Ovary (tissue), 10 donors: ENCODE measurements at regions of chr17 and their contacts with region 1.

Region 1: DNA sequence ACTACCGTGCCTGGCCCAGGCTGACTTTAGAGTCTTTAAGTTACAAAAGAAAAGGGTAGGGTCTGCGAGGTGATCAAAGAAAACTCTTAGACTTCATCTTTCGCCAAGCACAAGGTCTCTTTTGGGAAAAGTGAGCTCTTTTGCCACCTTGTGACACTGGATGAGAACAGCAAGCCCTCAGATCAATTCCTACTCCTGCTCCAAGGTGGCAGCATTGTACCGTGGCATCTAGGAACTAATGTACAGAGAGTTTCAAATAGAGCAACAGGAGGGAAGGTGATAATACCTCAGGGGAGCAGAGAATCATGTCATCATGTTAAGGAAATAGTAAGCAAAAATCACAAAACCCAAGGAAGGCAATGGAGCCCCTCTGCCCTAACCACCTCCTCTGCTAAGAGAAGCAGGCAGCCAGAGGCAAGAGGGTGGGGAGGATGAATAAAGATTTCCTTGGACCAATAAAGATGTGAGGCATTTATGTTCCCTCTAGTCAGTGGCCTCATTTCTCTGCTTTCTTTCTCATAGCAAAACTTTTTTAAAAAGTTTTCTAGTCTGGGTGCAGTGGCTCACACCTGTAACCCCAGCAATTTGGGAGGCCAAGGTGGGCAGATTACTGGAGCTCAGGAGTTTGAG is 2.1 kb upstream of the C17orf78 start:
- DNase-seq: peak; percentile 45 to 60 (median 56)
- H3K4me3 ChIP-seq: no peak overlapping the region
- H3K27ac ChIP-seq: no peak overlapping the region
- H3K4me1 ChIP-seq: no peaks in the 10 kb centered on the region
- H3K27me3 ChIP-seq: no peaks in the 10 kb centered on the region
- CTCF ChIP-seq: peak; percentile 64 to 90 (median 78)
- EP300 ChIP-seq: no peak
- POLR2A ChIP-seq: no peak

Region 2: DNA sequence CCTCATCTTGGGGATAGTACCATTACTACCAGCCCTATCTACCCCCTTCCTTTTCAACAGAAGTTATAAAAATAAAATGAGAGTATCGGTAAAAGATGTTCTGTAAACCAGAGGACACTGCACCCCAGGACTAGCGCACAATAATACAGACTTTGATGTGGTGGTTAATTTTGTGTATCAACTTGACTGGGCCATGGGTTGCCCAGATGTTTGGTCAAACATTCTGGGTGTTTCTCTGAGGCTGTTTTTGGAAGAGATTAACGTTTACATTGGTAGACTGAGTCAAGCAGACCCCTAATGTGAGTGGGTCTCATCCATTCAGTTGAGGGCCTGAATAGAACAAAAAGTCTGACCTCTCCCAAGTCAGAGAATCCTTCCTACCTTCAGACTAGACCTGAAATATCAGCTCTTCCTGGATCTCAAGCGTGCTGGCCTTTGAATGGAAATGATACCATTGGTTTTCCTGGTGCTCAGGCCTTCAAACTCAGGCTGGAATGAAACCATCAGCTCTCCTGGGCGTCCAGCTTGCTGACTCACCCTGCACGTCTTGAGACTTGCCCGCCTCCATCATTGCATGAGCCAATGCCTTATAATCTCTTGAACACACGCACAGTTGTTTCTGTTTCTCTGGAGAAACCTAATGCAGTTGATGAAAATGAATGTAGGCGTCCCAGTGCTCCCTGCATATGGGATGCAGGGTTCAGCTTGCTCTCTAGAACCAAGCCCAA is 762.1 kb before region 1 on chr17:
- intact Hi-C with region 1: loop called in 1 of 4 experiments (anchors 10 kb)
- DNase-seq: no peak
- H3K4me3 ChIP-seq: no peak overlapping the region
- H3K27ac ChIP-seq: no peak overlapping the region
- H3K4me1 ChIP-seq: peaks cover 5% of the 10 kb centered on the region
- H3K27me3 ChIP-seq: no peaks in the 10 kb centered on the region
- CTCF ChIP-seq: no peak
- EP300 ChIP-seq: no peak
- POLR2A ChIP-seq: no peak

Region 3: GRCh38 chr17:37327341-37328090 is 46.1 kb before region 1 on chr17:
- intact Hi-C with region 1: no loop called
- DNase-seq: no peak
- H3K4me3 ChIP-seq: no peak overlapping the region
- H3K27ac ChIP-seq: no peak overlapping the region
- H3K4me1 ChIP-seq: no peaks in the 10 kb centered on the region
- H3K27me3 ChIP-seq: no peaks in the 10 kb centered on the region
- CTCF ChIP-seq: no peak
- EP300 ChIP-seq: no peak
- POLR2A ChIP-seq: no peak

Region 4: DNA sequence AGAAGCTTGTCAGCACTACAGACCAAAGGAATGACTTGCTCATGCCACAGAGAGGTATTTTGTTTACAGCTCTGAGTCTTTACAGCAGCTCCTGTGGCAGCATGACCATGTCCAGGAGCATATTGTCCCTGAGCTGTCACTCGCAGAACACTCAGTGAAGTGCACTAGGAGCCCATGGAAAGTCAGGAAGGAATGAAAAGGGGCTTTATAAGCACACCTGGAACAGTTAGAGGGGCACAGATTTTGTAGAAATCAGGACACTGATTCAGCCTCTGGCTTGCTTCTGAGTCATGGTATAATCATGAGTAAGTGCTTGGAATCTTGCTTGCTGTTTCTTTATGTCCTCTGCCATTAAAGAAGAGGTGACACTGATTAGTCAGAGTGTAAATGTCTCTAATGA is 74.0 kb after region 1 on chr17:
- intact Hi-C with region 1: loop called in 1 of 4 experiments (anchors 10 kb)
- DNase-seq: no peak
- H3K4me3 ChIP-seq: no peak overlapping the region
- H3K27ac ChIP-seq: no peak overlapping the region
- H3K4me1 ChIP-seq: no peaks in the 10 kb centered on the region
- H3K27me3 ChIP-seq: no peaks in the 10 kb centered on the region
- CTCF ChIP-seq: no peak
- EP300 ChIP-seq: no peak
- POLR2A ChIP-seq: no peak